ENCODE measurements at regions of chr13 and their contacts with region 1.

Region 1: DNA sequence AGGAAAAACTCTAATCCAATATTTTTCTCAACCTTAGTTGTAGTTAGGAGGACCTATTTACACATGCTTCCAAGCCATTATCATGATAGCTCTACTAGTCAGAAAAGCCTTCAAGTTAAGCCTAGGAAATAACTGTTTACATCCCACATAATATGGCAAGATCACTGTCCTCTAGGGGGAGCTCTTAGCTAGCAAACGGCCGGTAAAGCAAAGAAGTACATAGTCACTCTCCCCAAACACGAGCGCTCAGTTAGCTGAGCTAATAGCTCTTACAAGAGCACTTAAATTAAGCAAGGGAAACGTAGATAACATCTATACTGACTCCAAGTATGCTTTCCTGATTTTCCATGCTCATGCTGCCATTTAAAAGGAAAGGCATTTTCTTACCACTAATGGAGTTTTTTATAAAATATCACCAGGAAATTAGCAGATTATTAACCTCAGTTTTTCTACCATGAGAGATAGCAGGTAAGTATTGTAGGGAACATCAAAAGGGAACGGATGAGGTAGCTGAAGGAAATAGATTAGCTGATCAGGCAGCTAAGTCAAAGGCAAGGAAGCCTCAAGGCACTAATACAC is 100.6 kb upstream of the PABPC3 start:
- DNase-seq: no peak
- ATAC-seq: peak; percentile 85

Region 2: GRCh38 chr13:25037057-25037813 is 41.9 kb after region 1 on chr13:
- intact Hi-C with region 1: loop called (anchors 5 kb)
- DNase-seq: no peak
- ATAC-seq: peak; percentile 73

Region 3: GRCh38 chr13:25114220-25114619 is 118.9 kb after region 1 on chr13:
- intact Hi-C with region 1: loop called (anchors 10 kb)
- DNase-seq: peak; percentile 62
- ATAC-seq: peak; percentile 91